PC-9 (cell line): ENCODE measurements at regions of chr7 and their contacts with region 1.

Region 1: DNA sequence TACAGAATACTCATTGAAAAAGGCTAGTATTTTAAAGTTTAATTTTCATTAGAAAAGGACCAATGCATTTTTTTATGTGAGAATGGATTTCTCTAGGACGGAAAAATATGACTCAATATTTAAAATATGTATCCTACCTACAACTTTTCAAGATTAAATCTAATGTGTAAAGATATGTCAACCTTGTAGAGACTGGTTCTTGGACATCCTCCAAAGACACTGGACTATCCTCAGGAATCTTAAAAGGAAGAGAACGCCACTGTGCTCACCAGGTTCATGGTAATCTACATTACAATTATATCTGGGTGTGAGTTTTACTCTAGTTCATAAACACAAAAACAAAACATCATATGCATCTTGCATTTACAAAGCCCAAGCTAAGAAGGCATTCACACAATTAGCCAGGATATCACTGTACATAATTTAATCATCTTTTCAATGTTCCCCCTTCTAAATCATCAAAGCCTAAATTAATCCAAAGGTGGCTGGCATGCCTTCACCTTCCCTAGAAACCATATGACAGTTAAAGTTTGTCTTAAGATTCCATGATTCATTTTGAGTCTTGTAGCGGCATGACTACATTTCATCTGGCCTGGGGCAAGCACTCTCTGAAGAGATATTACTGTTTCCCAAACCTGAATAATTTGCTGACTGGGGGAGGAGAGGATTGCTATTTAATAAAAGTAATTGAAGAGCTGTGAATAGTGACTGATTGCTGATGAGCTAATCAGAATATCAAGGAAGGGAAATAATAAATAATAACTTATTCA is 12.0 kb downstream of the SGCE start:
- DNase-seq: peak; percentile 34 to 62
- H3K4me3 ChIP-seq: no peak overlapping the region
- H3K27ac ChIP-seq: no peak overlapping the region
- H3K4me1 ChIP-seq: no peaks in the 10 kb centered on the region; the same call in 1 of the 2 replicates
- H3K27me3 ChIP-seq: no peaks in the 10 kb centered on the region
- CTCF ChIP-seq: no peak

Region 2: GRCh38 chr7:94509879-94510581 is 133.9 kb before region 1 on chr7:
- CTCF ChIA-PET with region 1: no interaction called
- POLR2A ChIA-PET with region 1: no interaction called
- intact Hi-C with region 1: loop called (anchors 2 kb)
- DNase-seq: peak; percentile 58 to 75
- H3K4me3 ChIP-seq: peak overlapping the region; percentile 81
- H3K27ac ChIP-seq: peak overlapping the region; percentile 69
- H3K4me1 ChIP-seq: peaks cover 33% of the 10 kb centered on the region
- H3K27me3 ChIP-seq: no peaks in the 10 kb centered on the region
- CTCF ChIP-seq: no peak

Region 3: DNA sequence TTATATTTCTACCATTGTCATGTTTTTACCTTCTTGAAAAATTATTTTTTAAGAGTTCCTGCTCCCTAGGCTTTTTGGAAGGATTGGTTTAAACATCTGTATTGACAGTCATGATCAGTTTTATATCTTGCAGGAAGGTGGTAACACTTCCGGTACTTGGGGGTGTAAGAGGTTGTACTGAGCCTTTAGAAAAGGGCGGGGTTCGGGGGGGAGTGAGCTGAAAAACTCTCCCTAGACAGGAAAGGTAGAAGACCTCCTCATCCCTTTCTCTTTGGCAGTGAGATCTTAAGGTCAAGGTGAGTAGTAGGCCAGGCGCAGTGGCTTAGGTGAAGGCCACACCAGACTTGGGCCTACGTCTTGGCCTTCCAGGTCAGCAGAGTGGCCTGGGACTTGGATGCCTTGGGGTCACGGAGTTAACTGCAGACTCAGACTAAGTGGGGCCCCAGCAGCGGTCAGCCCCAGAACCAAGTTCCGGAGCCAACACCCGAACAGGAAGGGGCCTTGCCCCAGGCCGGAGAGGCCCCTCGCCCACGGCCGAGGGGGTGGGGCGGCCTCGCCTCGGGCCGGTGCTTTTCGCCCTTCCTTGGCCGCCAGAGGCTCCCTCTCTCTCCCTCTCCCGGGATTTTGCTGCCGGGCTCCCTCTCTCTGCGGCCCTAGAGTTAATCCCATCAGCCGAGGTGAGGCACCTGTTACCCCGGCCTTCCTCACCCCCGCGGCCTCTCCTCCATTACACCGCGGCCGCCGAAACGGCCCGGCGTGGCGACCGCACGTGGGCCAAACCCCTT is 263.3 kb after region 1 on chr7 and contains the start of gene PPP1R9A:
- CTCF ChIA-PET with region 1: no interaction called
- POLR2A ChIA-PET with region 1: no interaction called
- intact Hi-C with region 1: loop called (anchors 5 kb)
- DNase-seq: peak in 1 of 2 experiments; percentile 62
- H3K4me3 ChIP-seq: peak within 1 kb of the TSS; percentile 72
- H3K27ac ChIP-seq: no peak within 1 kb of the TSS
- H3K4me1 ChIP-seq: peaks cover 11% of the 10 kb centered on the region; the same call in 1 of the 2 replicates
- H3K27me3 ChIP-seq: no peaks in the 10 kb centered on the region
- CTCF ChIP-seq: no peak; the same call in 1 of the 2 replicates
- total RNA-seq, gene PPP1R9A: 11.5 and 11.9 TPM in 2 replicates